ENCODE measurements at regions of chrX and their contacts with region 1.

Region 1: DNA sequence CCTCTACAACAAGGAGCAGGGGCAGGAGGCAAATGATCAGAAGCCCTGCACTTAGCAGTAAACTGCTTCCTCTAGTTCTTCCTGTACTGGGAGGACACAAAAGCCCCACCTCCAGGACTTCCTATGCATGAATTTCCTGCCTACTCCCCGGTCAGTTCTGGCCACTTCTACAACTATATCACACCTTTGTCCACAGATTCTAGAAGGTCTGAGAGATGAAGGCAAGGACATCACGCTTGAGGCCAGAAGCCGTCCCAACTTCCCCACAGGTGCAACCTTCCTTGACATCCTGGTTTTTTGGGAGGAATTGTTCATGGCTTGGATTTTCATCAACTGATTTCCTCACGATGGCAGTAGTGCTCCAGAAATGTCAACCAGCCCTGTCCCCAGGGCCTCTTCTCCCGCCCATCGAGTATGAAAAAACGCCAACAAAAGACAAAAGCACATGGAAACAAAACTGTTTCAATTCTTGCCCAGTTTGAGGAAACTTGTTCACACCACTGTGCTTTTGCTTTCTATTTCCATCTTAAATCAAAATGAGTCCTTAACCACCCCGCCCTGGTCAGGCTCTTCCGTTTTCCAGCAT is 206.5 kb upstream of the STK26 start:
- DNase-seq: peak; percentile 87
- H3K4me3 Mint-ChIP-seq: peak overlapping the region; percentile 69
- H3K27ac Mint-ChIP-seq: peak overlapping the region; percentile 88
- H3K4me1 Mint-ChIP-seq: peaks cover 45% of the 10 kb centered on the region
- H3K27me3 Mint-ChIP-seq: no peaks in the 10 kb centered on the region

Region 2: DNA sequence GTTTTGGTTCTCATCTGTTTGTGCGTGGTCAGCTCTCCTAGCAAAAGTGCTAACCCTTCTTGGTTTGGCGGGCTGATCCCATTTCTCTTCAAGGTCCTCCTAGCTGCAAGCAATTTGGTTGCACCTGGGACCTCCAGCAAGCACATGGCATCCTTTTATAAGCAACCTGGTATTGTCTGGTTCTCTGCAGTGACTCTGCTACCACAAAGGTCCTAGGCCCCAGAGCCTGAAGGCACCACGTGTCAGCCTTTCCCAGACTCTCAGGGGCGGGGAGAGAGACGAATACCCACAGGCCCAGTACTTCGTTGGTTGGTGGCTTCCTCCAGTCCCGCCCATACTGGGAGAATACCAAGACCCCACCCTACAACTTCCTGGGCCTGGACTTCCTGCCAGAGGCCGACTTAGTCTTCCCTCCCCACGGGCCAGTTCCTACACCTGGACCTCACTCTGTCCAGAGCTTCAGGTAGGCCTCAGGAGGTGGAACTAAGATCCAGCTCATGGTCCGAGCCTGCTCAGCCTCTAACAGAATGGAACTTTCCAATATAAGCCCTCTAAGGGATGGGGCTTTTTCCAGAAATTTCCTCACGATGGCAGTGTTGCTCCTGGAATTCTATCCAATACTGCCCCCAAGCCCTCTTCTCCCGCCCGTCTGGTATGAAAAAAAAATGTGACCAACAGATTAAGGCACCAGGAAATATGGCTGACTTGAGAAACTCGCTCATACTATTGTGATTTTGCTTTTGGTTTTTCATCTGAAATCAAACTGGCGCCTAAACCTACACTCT is 13.9 kb after region 1 on chrX:
- CTCF ChIA-PET with region 1: interaction called, 17 read pairs
- DNase-seq: peak; percentile 79
- H3K4me3 Mint-ChIP-seq: peak overlapping the region; percentile 80
- H3K27ac Mint-ChIP-seq: peak overlapping the region; percentile 93
- H3K4me1 Mint-ChIP-seq: peaks cover 46% of the 10 kb centered on the region
- H3K27me3 Mint-ChIP-seq: no peaks in the 10 kb centered on the region